ENCODE measurements at regions of chr12 and their contacts with region 1.

Region 1: GRCh38 chr12:103279444-103279843 is 216.3 kb downstream of the C12orf42 start:
- DNase-seq: no peak
- ATAC-seq: peak; percentile 89
- H3K4me3 Mint-ChIP-seq: no peak overlapping the region
- H3K27ac Mint-ChIP-seq: no peak overlapping the region
- H3K4me1 Mint-ChIP-seq: peaks cover 5% of the 10 kb centered on the region
- H3K27me3 Mint-ChIP-seq: no peaks in the 10 kb centered on the region

Region 2: GRCh38 chr12:102797528-102797927 is 481.9 kb before region 1 on chr12:
- CTCF ChIA-PET with region 1: no interaction called
- POLR2A ChIA-PET with region 1: no interaction called
- intact Hi-C with region 1: no loop called
- DNase-seq: no peak
- ATAC-seq: no peak
- H3K4me3 Mint-ChIP-seq: no peak overlapping the region
- H3K27ac Mint-ChIP-seq: no peak overlapping the region
- H3K4me1 Mint-ChIP-seq: no peaks in the 10 kb centered on the region
- H3K27me3 Mint-ChIP-seq: peaks cover 2% of the 10 kb centered on the region

Region 3: GRCh38 chr12:102958073-102958829 is 321.2 kb before region 1 on chr12:
- CTCF ChIA-PET with region 1: no interaction called
- POLR2A ChIA-PET with region 1: no interaction called
- intact Hi-C with region 1: loop called in 1 of 2 experiments (anchors 10 kb)
- DNase-seq: peak; percentile 50
- ATAC-seq: no peak
- H3K4me3 Mint-ChIP-seq: peak overlapping the region; percentile 42
- H3K27ac Mint-ChIP-seq: no peak overlapping the region
- H3K4me1 Mint-ChIP-seq: peaks cover 30% of the 10 kb centered on the region
- H3K27me3 Mint-ChIP-seq: peaks cover 75% of the 10 kb centered on the region

Region 4: GRCh38 chr12:103313894-103314293 is 34.5 kb after region 1 on chr12:
- CTCF ChIA-PET with region 1: no interaction called
- POLR2A ChIA-PET with region 1: no interaction called
- intact Hi-C with region 1: no loop called
- DNase-seq: no peak
- ATAC-seq: peak; percentile 26
- H3K4me3 Mint-ChIP-seq: no peak overlapping the region
- H3K27ac Mint-ChIP-seq: no peak overlapping the region
- H3K4me1 Mint-ChIP-seq: peaks cover 3% of the 10 kb centered on the region
- H3K27me3 Mint-ChIP-seq: no peaks in the 10 kb centered on the region

Region 5: GRCh38 chr12:103348935-103349334 is 69.5 kb after region 1 on chr12:
- CTCF ChIA-PET with region 1: no interaction called
- POLR2A ChIA-PET with region 1: no interaction called
- intact Hi-C with region 1: no loop called
- DNase-seq: no peak
- ATAC-seq: no peak
- H3K4me3 Mint-ChIP-seq: no peak overlapping the region
- H3K27ac Mint-ChIP-seq: no peak overlapping the region
- H3K4me1 Mint-ChIP-seq: peaks cover 6% of the 10 kb centered on the region
- H3K27me3 Mint-ChIP-seq: no peaks in the 10 kb centered on the region